A673 (cell line): ENCODE measurements at regions of chr1 and their contacts with region 1.

Region 1: GRCh38 chr1:231301990-231302389 is 35.7 kb downstream of the EXOC8 start:
- DNase-seq: no peak
- H3K4me3 ChIP-seq: no peak overlapping the region
- H3K27ac ChIP-seq: no peak overlapping the region
- H3K4me1 ChIP-seq: no peaks in the 10 kb centered on the region
- H3K27me3 ChIP-seq: no peaks in the 10 kb centered on the region
- CTCF ChIP-seq: no peak

Region 2: DNA sequence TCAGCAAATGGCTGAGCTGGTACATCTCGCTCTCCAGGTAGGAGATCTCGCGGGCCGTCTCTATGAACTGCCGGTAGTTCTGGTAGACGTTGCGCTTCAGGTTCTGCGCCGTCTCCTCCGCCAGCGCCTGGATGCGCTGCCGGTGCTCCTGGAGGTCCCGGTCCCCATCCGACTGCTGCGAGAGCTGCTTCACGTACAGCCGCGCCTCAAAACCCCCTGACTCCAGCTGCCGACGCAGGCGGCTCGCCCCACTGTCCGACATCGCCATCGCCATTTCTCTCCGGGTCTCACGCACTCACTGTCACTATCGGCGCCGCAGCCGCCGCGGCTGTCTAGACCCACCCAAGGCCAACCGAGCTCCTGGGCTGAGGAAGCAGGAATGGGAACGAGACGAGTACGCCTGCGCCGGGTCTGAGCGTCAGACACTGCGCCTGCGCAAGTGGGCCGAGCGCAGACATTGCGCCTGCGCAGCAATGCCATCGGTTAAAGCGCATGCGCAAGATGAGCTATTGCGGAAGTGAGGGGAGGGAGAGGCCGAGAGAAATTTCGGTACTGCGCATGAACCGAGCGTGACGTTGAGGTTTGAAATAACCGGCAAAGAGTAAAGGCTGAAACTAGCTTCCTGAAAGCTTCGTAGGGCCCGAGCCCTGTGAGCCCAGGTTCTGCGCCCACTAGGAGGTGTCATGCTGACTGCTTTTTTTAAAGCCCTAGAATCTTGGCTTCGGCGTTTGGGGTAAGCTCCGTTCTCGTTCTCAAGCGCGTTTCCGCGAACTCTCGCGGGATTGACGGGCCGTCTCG is 35.7 kb after region 1 on chr1 and contains the start of gene EXOC8:
- CTCF ChIA-PET with region 1: no interaction called
- POLR2A ChIA-PET with region 1: no interaction called
- intact Hi-C with region 1: no loop called
- DNase-seq: peak; percentile 98
- H3K4me3 ChIP-seq: peak within 1 kb of the TSS; percentile 74
- H3K27ac ChIP-seq: peak within 1 kb of the TSS; percentile 86
- H3K4me1 ChIP-seq: peaks cover 15% of the 10 kb centered on the region
- H3K27me3 ChIP-seq: no peaks in the 10 kb centered on the region
- CTCF ChIP-seq: no peak
- total RNA-seq, gene EXOC8: 13.0 and 13.8 TPM in 2 replicates

Region 3: DNA sequence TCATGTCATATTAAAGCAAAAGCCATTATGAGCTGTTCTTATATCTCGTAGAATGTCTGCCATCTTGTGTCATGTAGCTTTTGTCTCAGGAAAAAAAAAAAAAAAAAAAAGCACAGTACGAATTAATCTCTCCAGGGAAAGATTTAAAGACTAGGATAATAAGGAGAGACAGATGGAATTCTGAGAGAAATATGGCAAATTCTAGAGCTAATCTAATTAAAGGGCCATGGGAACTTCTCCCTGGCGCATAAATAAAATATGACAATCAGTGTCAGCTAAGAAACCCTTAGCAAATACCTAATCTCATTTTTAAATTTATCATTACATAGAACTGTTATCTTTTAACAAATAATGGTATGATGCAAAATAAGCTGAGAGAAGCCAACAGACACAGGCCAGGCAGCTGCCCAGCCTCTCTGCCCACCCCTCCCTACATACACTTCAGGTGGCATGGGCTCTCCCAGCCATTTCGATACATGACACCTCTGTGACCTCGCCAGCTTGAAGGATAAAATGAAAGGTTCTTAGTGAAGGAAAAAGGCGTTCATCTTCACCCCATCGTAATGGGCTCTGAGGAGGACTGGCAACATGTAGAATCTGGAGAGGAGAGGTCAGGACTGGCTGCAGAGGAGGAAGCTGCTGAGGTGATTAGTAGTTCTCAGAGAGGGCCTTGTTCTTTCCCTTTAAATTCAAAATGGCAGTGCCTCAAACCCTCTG is 364.4 kb after region 1 on chr1:
- CTCF ChIA-PET with region 1: no interaction called
- POLR2A ChIA-PET with region 1: interaction called, 14 read pairs
- intact Hi-C with region 1: no loop called
- DNase-seq: no peak
- H3K4me3 ChIP-seq: no peak overlapping the region
- H3K27ac ChIP-seq: no peak overlapping the region
- H3K4me1 ChIP-seq: no peaks in the 10 kb centered on the region
- H3K27me3 ChIP-seq: no peaks in the 10 kb centered on the region
- CTCF ChIP-seq: no peak